Right ventricle myocardium inferior (tissue), 1 donor: ENCODE measurements at regions of chr22 and their contacts with region 1.

Region 1: GRCh38 chr22:46390652-46391301 is 55.3 kb downstream of the TRMU start:
- DNase-seq: no peak
- ATAC-seq: peak; percentile 51

Region 2: GRCh38 chr22:46328782-46329181 is 62.0 kb before region 1 on chr22:
- intact Hi-C with region 1: no loop called
- DNase-seq: no peak
- ATAC-seq: no peak

Region 3: DNA sequence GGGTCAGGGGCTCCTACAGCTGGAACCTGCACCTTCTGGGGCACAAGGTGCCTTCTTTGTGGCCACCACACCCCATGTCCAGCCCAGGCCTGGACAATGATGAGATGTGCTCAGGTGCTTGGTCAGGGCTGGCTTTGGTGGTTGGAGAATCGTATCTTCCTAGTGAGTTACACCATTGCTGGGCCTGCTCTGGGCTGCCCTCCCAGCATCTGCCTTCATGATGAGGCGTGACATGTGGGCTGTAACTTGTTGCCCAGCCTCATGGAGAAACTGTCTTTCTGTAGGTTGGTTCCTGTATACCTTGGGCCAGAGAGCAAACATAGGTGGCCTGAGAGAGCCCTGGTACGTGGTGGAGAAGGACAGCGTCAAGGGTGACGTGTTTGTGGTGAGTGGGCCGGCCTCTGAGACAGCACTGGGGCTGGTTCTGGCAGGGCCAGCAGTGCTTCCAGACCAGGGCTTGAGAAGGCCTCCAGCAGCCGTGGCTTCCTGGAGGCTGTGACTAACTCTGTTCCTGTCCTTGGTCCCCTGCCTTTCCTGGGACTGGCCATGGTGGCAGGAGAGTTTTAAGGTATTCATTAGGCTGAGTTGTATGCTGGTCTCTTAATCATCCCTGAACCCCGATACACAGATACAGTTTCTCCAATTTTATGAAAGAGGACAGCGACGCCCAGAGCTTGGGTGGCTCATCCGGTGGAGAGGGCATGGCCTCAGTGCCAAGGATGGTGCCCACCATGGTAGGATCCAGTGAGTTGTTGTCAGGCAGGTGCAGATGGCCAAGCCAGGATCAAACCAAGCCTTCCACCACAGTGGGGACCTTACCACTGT is 37.1 kb before region 1 on chr22:
- intact Hi-C with region 1: loop called (anchors 1 kb)
- DNase-seq: peak; percentile 50
- ATAC-seq: peak; percentile 14